ENCODE measurements at regions of chr12 and their contacts with region 1.

Region 1: GRCh38 chr12:95217377-95218149 is at the starts of genes FGD6 and VEZT:
- DNase-seq: peak; percentile 99
- total RNA-seq, gene FGD6: 19.9 TPM
- total RNA-seq, gene VEZT: 77.4 TPM

Region 2: GRCh38 chr12:94615284-94616181 is 602.0 kb before region 1 on chr12:
- intact Hi-C with region 1: no loop called
- DNase-seq: no peak

Region 3: DNA sequence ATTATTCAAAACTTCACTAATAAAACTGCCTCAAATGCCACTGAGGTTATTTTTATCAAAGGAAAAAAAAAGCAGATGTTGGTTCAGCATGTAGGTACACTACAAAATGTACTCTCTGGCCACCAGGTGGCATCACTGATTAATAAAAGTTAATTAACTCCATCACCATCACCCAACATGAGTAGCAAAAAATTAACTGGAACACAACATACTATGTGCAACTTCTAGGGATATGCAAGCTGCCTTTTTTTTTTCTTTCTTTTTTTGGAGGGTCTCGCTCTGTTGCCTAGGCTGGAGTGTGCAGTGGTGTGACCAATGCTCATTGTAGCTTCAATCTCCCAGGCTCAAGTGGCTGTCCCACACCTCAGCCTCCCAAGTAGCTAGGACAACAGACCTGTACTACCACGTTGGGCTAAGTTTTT is 100.4 kb before region 1 on chr12:
- intact Hi-C with region 1: loop called (anchors 5 kb)
- DNase-seq: no peak

Region 4: GRCh38 chr12:95143621-95144205 is 73.8 kb before region 1 on chr12:
- intact Hi-C with region 1: loop called (anchors 5 kb)
- DNase-seq: no peak

Region 5: GRCh38 chr12:95336390-95337067 is 119.0 kb after region 1 on chr12:
- intact Hi-C with region 1: loop called (anchors 2 kb)
- DNase-seq: peak; percentile 83

Region 6: DNA sequence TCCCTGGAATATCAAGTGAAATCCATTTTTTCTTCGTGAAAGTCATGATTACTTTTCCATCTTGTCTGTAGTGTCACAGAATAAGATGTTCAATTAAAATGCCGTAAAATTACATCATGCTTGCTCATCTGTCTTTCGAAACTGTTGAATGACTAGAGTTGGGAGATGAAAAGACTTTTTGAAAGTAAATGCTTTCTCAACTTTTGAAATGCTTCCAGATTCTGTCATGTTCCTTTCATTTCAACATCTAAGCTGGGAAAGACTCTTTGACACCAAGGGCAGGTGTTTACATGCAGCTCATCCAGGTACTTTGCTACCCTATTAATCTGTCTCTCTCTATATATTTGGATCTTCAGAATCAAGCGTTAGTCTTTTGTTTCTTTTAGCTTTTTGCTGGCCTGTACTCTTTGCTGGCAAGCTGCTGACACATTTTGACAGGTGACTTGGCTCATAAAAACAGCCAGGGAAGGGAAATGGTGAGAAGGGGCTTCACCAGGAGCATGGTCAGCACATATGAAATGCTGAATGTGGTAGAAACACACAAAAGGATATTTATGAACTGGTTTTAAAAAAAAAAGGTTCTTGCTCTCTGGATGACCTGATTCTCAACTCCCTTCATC is 179.4 kb after region 1 on chr12:
- intact Hi-C with region 1: no loop called
- DNase-seq: no peak

Region 7: DNA sequence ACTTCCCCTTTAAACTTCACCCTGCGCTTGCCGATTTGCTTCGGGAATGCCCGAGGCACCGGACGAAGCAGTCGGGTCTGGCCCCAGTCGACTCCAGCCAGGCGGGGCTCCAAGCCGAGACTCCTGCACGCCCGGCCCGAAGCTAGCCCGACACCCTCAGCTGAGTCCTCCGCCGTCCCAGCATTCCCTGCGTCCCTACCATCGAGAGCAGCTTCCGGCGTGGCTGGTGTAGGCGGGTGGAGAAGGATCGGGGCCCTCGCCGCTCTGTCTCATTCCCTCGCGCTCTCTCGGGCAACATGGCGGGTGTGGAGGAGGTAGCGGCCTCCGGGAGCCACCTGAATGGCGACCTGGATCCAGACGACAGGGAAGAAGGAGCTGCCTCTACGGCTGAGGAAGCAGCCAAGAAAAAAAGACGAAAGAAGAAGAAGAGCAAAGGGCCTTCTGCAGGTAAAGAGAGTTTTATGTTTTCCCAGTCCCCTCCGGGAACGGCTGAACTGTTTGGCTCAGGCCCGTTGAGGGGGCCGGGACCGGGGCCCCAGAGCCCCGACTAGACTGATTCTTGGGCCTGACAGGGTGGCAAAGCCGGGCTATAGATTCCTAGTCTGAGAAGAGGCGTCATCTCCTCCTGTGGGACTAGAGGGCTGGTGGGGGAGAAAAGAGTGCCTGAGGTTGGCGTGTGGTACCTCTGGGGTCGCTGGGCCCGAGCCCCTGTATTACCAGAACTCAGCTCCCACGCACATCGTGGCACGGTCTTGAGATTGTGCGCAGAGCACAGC is 256.5 kb after region 1 on chr12 and contains the start of gene METAP2:
- intact Hi-C with region 1: loop called (anchors 5 kb)
- DNase-seq: peak; percentile 98
- total RNA-seq, gene METAP2: 63.5 TPM

Region 8: DNA sequence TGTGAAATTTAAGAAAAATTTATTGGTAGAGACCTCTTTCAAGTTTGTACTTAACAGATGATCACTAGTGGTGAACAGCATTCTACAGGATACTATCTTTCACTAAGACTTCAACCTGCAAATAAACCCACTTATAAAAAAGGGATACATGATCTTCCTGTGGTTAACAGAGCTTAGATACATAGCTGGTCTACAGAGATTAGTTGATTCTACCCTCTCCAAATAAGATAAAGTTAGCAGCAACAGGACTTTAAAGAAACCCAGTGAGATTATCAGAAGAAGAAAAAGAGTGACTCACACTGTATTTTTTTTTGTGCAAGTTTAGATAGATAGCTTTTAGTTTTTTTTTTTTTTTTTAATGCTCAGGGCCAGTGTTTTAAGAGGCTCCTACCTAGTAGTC is 299.2 kb after region 1 on chr12:
- intact Hi-C with region 1: no loop called
- DNase-seq: no peak